ENCODE measurements at regions of chr5 and their contacts with region 1.

Region 1: GRCh38 chr5:95554647-95555548 is at the starts of genes ARSK and SKIC3:
- DNase-seq: peak; percentile 96 to 97
- H3K4me3 ChIP-seq: peak within 1 kb of the TSS; percentile 78
- H3K4me3 Mint-ChIP-seq: peak within 1 kb of the TSS; percentile 83
- H3K27ac Mint-ChIP-seq: peak within 1 kb of the TSS; percentile 86
- H3K4me1 ChIP-seq: no peaks in the 10 kb centered on the region
- H3K4me1 Mint-ChIP-seq: peaks cover 20% of the 10 kb centered on the region
- H3K27me3 ChIP-seq: no peaks in the 10 kb centered on the region
- H3K27me3 Mint-ChIP-seq: no peaks in the 10 kb centered on the region
- CTCF ChIP-seq: peak; percentile 10 to 54
- total RNA-seq, gene ARSK: 5.0 and 5.5 TPM in 2 replicates
- total RNA-seq, gene SKIC3: 75.6 and 78.4 TPM in 2 replicates

Region 2: GRCh38 chr5:95609711-95610110 is 54.8 kb after region 1 on chr5:
- CTCF ChIA-PET with region 1: no interaction called
- POLR2A ChIA-PET with region 1: no interaction called
- intact Hi-C with region 1: loop called (anchors 5 kb)
- DNase-seq: no peak
- H3K4me3 ChIP-seq: no peak overlapping the region
- H3K4me3 Mint-ChIP-seq: no peak overlapping the region
- H3K27ac Mint-ChIP-seq: no peak overlapping the region
- H3K4me1 ChIP-seq: no peaks in the 10 kb centered on the region
- H3K4me1 Mint-ChIP-seq: no peaks in the 10 kb centered on the region
- H3K27me3 ChIP-seq: no peaks in the 10 kb centered on the region
- H3K27me3 Mint-ChIP-seq: no peaks in the 10 kb centered on the region
- CTCF ChIP-seq: no peak

Region 3: GRCh38 chr5:95620030-95620869 is 65.4 kb after region 1 on chr5 and contains the start of gene GPR150:
- CTCF ChIA-PET with region 1: no interaction called
- POLR2A ChIA-PET with region 1: no interaction called
- intact Hi-C with region 1: loop called (anchors 1 kb)
- DNase-seq: peak; percentile 69 to 80
- H3K4me3 ChIP-seq: peak within 1 kb of the TSS; percentile 78
- H3K4me3 Mint-ChIP-seq: peak within 1 kb of the TSS; percentile 73
- H3K27ac Mint-ChIP-seq: peak within 1 kb of the TSS; percentile 6
- H3K4me1 ChIP-seq: no peaks in the 10 kb centered on the region
- H3K4me1 Mint-ChIP-seq: no peaks in the 10 kb centered on the region
- H3K27me3 ChIP-seq: no peaks in the 10 kb centered on the region
- H3K27me3 Mint-ChIP-seq: peaks cover 11% of the 10 kb centered on the region
- CTCF ChIP-seq: peak in 1 of 2 experiments; percentile 3
- total RNA-seq, gene GPR150: 0.21 and 0.27 TPM in 2 replicates

Region 4: GRCh38 chr5:95846554-95847260 is 291.8 kb after region 1 on chr5:
- CTCF ChIA-PET with region 1: no interaction called
- POLR2A ChIA-PET with region 1: no interaction called
- intact Hi-C with region 1: loop called (anchors 10 kb)
- DNase-seq: peak; percentile 66 to 78
- H3K4me3 ChIP-seq: no peak overlapping the region
- H3K4me3 Mint-ChIP-seq: no peak overlapping the region
- H3K27ac Mint-ChIP-seq: no peak overlapping the region
- H3K4me1 ChIP-seq: no peaks in the 10 kb centered on the region
- H3K4me1 Mint-ChIP-seq: no peaks in the 10 kb centered on the region
- H3K27me3 ChIP-seq: no peaks in the 10 kb centered on the region
- H3K27me3 Mint-ChIP-seq: no peaks in the 10 kb centered on the region
- CTCF ChIP-seq: peak; percentile 91 to 92

Measured in Caco-2 (cell line).